ENCODE measurements at regions of chr21 and their contacts with region 1.

Region 1: DNA sequence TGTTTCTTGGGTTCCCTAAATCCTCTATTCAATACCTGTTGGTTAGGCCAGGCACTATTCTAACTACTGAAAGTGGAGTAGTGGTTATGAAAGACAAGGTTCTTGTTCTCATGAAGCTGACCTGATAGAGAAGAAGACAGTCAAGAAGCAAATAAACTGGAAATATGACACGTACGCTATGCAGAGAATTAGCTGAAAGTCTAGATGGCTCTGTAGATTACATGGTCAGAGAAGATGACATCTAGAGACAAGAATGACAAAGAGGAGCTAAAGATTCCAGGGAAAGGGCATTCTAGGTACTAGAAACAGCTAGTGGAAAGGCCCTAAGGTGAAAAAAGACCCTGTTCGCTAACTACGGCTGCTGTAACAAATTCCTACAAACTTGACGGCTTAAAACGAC is 67.9 kb upstream of the NRIP1 start:
- DNase-seq: no peak
- ATAC-seq: no peak
- H3K4me3 ChIP-seq: no peak overlapping the region
- H3K4me3 Mint-ChIP-seq: no peak overlapping the region
- H3K27ac ChIP-seq: no peak overlapping the region
- H3K27ac Mint-ChIP-seq: no peak overlapping the region
- H3K4me1 ChIP-seq: no peaks in the 10 kb centered on the region
- H3K4me1 Mint-ChIP-seq: no peaks in the 10 kb centered on the region
- H3K27me3 ChIP-seq: no peaks in the 10 kb centered on the region
- H3K27me3 Mint-ChIP-seq: peaks cover 0 to 9% (median 4%) of the 10 kb centered on the region in 5 donors

Region 2: GRCh38 chr21:14977814-14978213 is 154.9 kb before region 1 on chr21:
- CTCF ChIA-PET with region 1: no interaction called
- POLR2A ChIA-PET with region 1: no interaction called
- intact Hi-C with region 1: no loop called
- DNase-seq: no peak
- ATAC-seq: no peak
- H3K4me3 ChIP-seq: no peak overlapping the region
- H3K4me3 Mint-ChIP-seq: no peak overlapping the region
- H3K27ac ChIP-seq: no peak overlapping the region
- H3K27ac Mint-ChIP-seq: no peak overlapping the region
- H3K4me1 ChIP-seq: no peaks in the 10 kb centered on the region
- H3K4me1 Mint-ChIP-seq: peaks cover 0 to 35% (median 8%) of the 10 kb centered on the region in 7 donors
- H3K27me3 ChIP-seq: no peaks in the 10 kb centered on the region
- H3K27me3 Mint-ChIP-seq: no peaks in the 10 kb centered on the region

Region 3: GRCh38 chr21:15098908-15099307 is 33.8 kb before region 1 on chr21:
- CTCF ChIA-PET with region 1: no interaction called
- POLR2A ChIA-PET with region 1: no interaction called
- intact Hi-C with region 1: loop called in 1 of 2 experiments (anchors 1 kb)
- DNase-seq: no peak
- ATAC-seq: no peak
- H3K4me3 ChIP-seq: no peak overlapping the region
- H3K4me3 Mint-ChIP-seq: no peak overlapping the region
- H3K27ac ChIP-seq: no peak overlapping the region
- H3K27ac Mint-ChIP-seq: no peak overlapping the region
- H3K4me1 ChIP-seq: no peaks in the 10 kb centered on the region
- H3K4me1 Mint-ChIP-seq: no peaks in the 10 kb centered on the region
- H3K27me3 ChIP-seq: no peaks in the 10 kb centered on the region
- H3K27me3 Mint-ChIP-seq: no peaks in the 10 kb centered on the region

Measured in naive thymus-derived CD4-positive, alpha-beta T cell (primary cell).